Mammary epithelial cell (primary cell): ENCODE measurements at regions of chr2 and their contacts with region 1.

Region 1: DNA sequence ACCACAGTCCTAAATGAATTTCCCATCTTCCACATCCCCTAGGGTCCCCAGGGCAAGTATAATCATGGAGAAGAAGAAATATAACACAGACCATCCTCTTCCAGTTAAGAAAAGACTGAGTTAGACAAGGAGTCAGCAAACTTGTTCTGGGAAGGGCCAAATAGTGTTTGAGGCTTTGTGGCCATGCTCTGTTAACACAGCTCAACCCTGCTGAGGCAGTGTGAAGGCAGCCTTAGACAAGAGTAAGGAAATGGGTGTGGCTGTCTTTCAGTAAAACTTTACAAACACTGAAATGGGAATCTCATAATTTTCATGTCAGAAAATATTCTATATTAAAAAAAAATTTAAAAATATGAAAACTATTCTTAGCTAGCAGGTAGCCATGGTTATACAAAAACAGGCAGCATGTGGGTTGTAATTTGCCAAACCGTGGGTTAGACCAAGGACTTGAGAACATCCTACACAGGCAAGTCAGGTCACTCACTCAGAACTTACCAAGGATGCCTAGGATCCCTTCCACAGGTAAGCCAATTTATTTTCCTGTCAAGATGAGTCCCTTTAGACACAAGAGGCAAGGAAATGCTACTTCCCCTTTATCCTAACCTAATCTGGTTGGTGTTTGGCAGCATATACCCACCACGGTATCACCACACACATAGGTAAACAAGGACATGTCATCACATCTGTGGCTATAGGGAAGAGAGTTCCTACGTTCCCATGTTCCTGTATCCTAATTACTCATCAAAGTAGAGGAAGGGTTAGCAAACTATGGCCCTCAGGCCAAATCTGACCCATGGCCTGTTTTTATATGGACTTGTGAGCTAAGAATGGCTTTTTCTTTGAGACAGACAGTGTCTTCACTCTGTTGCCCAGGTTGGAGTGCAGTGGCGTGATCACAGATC is 31.9 kb downstream of the C2orf74 start:
- DNase-seq: peak; percentile 31
- H3K4me3 ChIP-seq: no peak overlapping the region
- H3K27ac ChIP-seq: no peak overlapping the region
- H3K4me1 ChIP-seq: peaks cover 3% of the 10 kb centered on the region
- H3K27me3 ChIP-seq: no peaks in the 10 kb centered on the region
- CTCF ChIP-seq: no peak

Region 2: DNA sequence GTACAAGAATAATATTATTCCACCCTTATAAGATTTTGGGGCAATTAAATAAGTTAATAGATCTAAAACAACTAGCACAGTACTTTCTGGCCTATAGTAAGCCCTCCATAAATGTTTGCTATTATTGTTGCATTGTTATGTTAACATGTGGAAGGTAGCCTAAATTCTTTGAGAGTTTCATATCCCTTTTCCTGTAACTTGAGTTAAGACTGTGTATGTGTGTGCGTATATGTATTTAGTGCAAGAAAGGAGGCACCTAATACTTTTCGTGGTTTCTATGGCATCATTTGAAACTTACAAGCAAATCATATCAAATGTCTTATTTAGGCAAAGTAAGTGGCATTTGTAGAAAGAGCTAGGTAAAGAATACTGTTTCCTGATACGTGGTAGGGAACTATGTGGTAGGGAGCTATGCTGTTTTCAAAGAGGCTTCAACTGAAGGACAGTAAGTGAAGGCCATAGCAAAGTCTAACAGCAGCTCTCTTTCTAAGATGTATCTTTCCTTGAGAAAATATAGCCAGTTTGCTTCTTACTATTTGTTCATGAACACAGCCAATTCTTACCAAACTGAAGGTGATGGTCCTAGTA is 68.7 kb before region 1 on chr2:
- CTCF ChIA-PET with region 1: interaction called, 13 read pairs
- dilution Hi-C with region 1: no loop called
- in situ Hi-C with region 1: no loop called
- intact Hi-C with region 1: no loop called
- DNase-seq: no peak
- H3K4me3 ChIP-seq: no peak overlapping the region
- H3K27ac ChIP-seq: no peak overlapping the region
- H3K4me1 ChIP-seq: no peaks in the 10 kb centered on the region
- H3K27me3 ChIP-seq: no peaks in the 10 kb centered on the region
- CTCF ChIP-seq: no peak

Region 3: DNA sequence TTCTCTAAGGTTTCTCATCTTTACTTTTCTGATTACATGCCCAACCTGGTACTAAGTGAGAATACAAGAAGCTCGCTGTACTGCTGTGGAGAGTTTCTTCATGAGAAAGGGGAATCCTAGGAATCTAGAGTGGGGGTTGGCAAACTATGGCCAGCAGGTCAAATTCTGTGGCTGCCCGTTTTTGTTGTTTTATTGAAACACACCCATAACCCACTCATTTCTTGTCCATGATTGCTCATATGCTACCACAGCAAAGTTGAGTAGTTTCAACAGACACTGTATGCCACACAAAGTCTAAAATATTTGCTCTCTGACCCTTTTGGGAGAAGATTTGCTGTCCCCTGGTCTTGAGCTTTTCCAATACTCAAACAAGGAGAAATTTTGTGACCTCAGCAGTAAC is 26.8 kb after region 1 on chr2:
- CTCF ChIA-PET with region 1: no interaction called
- dilution Hi-C with region 1: no loop called
- in situ Hi-C with region 1: no loop called
- intact Hi-C with region 1: no loop called
- DNase-seq: peak; percentile 32
- H3K4me3 ChIP-seq: no peak overlapping the region
- H3K27ac ChIP-seq: no peak overlapping the region
- H3K4me1 ChIP-seq: no peaks in the 10 kb centered on the region
- H3K27me3 ChIP-seq: no peaks in the 10 kb centered on the region
- CTCF ChIP-seq: no peak